Cardiac septum (tissue), 1 donor: ENCODE measurements at regions of chr4 and their contacts with region 1.

Region 1: DNA sequence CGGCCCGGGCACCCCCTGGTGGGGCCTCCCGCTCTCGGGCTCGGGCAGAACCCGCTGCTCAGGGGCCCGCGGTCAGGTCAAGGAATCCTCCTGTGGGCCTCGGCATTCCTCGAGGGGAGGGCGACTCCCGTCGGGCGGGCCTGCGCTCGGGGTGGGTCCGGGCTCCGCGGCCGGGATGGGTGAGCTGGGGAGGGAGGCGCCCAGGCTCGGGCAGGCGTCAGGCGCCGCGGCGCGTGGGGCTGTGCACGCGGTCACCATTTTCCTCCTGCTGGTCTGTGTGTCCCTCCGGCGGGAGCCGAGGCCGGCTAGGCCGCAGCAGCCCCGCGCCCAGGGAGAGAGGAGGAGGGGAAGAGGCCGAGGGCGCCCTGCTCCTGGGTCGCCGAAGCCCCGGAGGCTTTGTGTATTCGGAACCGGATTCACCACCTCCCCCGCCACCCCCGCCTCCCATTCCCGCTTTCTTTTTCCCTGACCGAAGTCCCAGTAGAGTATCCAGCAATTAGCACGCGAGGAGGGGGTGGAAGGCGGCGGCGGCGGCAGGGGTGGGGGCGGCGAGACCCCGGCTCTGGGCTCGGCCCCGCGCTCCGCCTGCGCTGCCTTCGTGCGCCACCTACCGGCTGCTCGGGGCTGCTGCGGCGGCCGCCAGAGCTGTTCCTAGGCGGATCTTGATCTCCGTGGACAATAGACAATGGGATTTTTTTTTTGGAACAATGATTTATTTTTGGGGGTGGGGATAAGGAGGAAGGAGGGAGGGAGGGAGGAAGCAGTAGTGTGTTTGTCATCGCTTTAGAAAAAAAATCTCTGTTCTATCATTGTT is 99.0 kb upstream of the MAML3 start:
- DNase-seq: peak; percentile 92

Region 2: GRCh38 chr4:139656614-139657486 is 596.1 kb before region 1 on chr4:
- intact Hi-C with region 1: loop called (anchors 5 kb)
- DNase-seq: no peak

Region 3: GRCh38 chr4:140012688-140013486 is 240.1 kb before region 1 on chr4:
- intact Hi-C with region 1: loop called (anchors 2 kb)
- DNase-seq: peak; percentile 78

Region 4: GRCh38 chr4:140095694-140096482 is 157.1 kb before region 1 on chr4:
- intact Hi-C with region 1: loop called (anchors 5 kb)
- DNase-seq: peak; percentile 79

Region 5: DNA sequence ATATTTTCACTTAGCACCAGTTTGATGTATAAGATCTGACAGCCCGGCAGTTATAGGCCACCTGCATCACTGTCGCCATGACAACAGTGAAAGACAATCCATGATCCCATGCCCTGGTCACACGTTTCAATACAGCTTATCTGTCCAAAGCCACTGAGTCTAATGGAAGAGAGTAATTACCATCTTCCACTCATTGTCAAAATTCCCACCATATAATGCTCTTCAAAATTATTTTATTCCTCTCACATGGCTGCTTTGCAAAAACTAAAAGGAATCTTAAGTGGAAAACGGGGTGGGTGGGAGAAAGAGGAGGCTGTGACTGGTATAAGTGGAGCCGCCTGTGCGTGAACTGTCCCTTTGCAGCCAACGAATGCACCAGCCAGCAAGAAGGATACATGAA is 143.2 kb before region 1 on chr4:
- intact Hi-C with region 1: no loop called
- DNase-seq: no peak

Region 6: GRCh38 chr4:140326395-140326993 is 73.5 kb after region 1 on chr4:
- intact Hi-C with region 1: loop called (anchors 5 kb)
- DNase-seq: no peak